Endothelial cell of umbilical vein (primary cell): ENCODE measurements at regions of chr14 and their contacts with region 1.

Region 1: DNA sequence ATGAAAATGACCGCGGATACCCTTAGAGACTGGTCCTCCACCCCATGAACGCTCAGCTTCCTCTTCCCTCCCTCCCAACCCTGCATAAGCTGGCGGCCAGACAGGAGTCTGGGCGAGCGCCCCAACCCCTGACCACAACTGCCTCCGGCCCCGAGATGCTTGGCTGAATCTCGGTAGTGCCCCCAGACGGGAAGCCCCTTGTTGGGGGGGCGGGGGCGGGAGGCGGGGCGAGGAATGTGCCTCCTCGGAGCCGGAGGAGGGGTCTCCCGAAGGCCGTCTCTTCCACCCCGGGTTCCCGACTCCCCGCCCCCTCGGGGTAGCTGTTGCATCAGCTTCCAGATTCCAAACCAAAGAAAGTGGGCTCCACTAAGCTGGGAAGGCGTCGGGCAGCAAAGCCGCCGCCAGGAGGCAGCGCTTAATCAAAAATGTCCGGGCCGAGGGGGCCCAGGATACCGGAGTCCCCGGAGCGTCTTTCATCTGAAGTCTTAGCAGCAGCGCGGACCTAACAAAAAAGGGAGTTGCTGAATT is 7.1 kb upstream of the MRPL52 start:
- DNase-seq: peak; percentile 91
- H3K4me3 ChIP-seq: peak overlapping the region; percentile 14 to 57 (median 32)
- H3K27ac ChIP-seq: peak overlapping the region; percentile 68
- H3K4me1 ChIP-seq: peaks cover 47% of the 10 kb centered on the region
- H3K27me3 ChIP-seq: no peaks in the 10 kb centered on the region
- CTCF ChIP-seq: peak; percentile 86 to 88
- POLR2A ChIP-seq: no peak

Region 2: GRCh38 chr14:21924479-21924878 is 898.2 kb before region 1 on chr14:
- CTCF ChIA-PET with region 1: no interaction called
- POLR2A ChIA-PET with region 1: no interaction called
- dilution Hi-C with region 1: no loop called
- intact Hi-C with region 1: no loop called
- DNase-seq: peak; percentile 43
- H3K4me3 ChIP-seq: no peak overlapping the region
- H3K27ac ChIP-seq: peak overlapping the region; percentile 84
- H3K4me1 ChIP-seq: peaks cover 18% of the 10 kb centered on the region
- H3K27me3 ChIP-seq: no peaks in the 10 kb centered on the region
- CTCF ChIP-seq: no peak
- POLR2A ChIP-seq: no peak

Region 3: GRCh38 chr14:22531451-22532344 is 290.9 kb before region 1 on chr14:
- CTCF ChIA-PET with region 1: no interaction called
- POLR2A ChIA-PET with region 1: no interaction called
- dilution Hi-C with region 1: no loop called
- intact Hi-C with region 1: no loop called
- DNase-seq: no peak
- H3K4me3 ChIP-seq: no peak overlapping the region
- H3K27ac ChIP-seq: no peak overlapping the region
- H3K4me1 ChIP-seq: peaks cover 19% of the 10 kb centered on the region
- H3K27me3 ChIP-seq: no peaks in the 10 kb centered on the region
- CTCF ChIP-seq: no peak
- POLR2A ChIP-seq: no peak

Region 4: GRCh38 chr14:22658946-22659345 is 163.7 kb before region 1 on chr14:
- CTCF ChIA-PET with region 1: interaction called, 85 read pairs
- POLR2A ChIA-PET with region 1: interaction called, 3 read pairs
- dilution Hi-C with region 1: no loop called
- intact Hi-C with region 1: loop called (anchors 1 kb)
- DNase-seq: peak; percentile 42
- H3K4me3 ChIP-seq: peak overlapping the region in 1 of 3 experiments; percentile 28
- H3K27ac ChIP-seq: peak overlapping the region; percentile 72
- H3K4me1 ChIP-seq: peaks cover 32% of the 10 kb centered on the region
- H3K27me3 ChIP-seq: no peaks in the 10 kb centered on the region
- CTCF ChIP-seq: no peak
- POLR2A ChIP-seq: no peak

Region 5: DNA sequence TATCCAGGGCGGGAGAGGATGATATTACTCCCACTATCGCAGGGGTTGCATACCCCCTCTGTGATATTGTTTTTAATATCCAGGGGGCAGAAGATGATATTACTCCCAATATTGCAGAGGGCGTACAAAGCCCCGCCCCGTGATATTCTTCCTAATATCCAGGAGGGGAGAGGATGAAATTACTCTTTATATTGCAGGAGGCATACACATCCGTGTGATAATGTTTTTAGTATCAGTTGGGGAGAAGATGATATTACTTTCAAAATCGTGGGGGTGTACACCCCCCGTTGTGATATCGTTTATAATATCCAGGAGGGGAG is 109.0 kb before region 1 on chr14:
- CTCF ChIA-PET with region 1: interaction called, 3 read pairs
- POLR2A ChIA-PET with region 1: interaction called, 7 read pairs
- dilution Hi-C with region 1: no loop called
- intact Hi-C with region 1: loop called (anchors 1 kb)
- DNase-seq: no peak
- H3K4me3 ChIP-seq: peak overlapping the region in 1 of 3 experiments; percentile 13
- H3K27ac ChIP-seq: peak overlapping the region; percentile 28
- H3K4me1 ChIP-seq: peaks cover 23% of the 10 kb centered on the region
- H3K27me3 ChIP-seq: no peaks in the 10 kb centered on the region
- CTCF ChIP-seq: no peak
- POLR2A ChIP-seq: no peak

Region 6: GRCh38 chr14:22726012-22726411 is 96.6 kb before region 1 on chr14:
- CTCF ChIA-PET with region 1: no interaction called
- POLR2A ChIA-PET with region 1: no interaction called
- dilution Hi-C with region 1: no loop called
- intact Hi-C with region 1: no loop called
- DNase-seq: no peak
- H3K4me3 ChIP-seq: no peak overlapping the region
- H3K27ac ChIP-seq: no peak overlapping the region
- H3K4me1 ChIP-seq: no peaks in the 10 kb centered on the region
- H3K27me3 ChIP-seq: no peaks in the 10 kb centered on the region
- CTCF ChIP-seq: no peak
- POLR2A ChIP-seq: no peak

Region 7: GRCh38 chr14:22836301-22837113 is 13.9 kb after region 1 on chr14 and contains the start of gene MMP14:
- CTCF ChIA-PET with region 1: interaction called, 63 read pairs
- POLR2A ChIA-PET with region 1: interaction called, 7 read pairs
- dilution Hi-C with region 1: no loop called
- intact Hi-C with region 1: loop called (anchors 1 kb)
- DNase-seq: peak; percentile 92
- H3K4me3 ChIP-seq: peak within 1 kb of the TSS; percentile 75 to 94 (median 86)
- H3K27ac ChIP-seq: peak within 1 kb of the TSS; percentile 84
- H3K4me1 ChIP-seq: peaks cover 32% of the 10 kb centered on the region
- H3K27me3 ChIP-seq: no peaks in the 10 kb centered on the region
- CTCF ChIP-seq: peak; percentile 26 to 54
- POLR2A ChIP-seq: peak; percentile 95
- total RNA-seq, gene MMP14: 603 and 615 TPM in 2 replicates

Region 8: GRCh38 chr14:22900081-22900799 is 77.6 kb after region 1 on chr14:
- CTCF ChIA-PET with region 1: interaction called, 36 read pairs
- POLR2A ChIA-PET with region 1: no interaction called
- dilution Hi-C with region 1: no loop called
- intact Hi-C with region 1: loop called (anchors 1 kb)
- DNase-seq: peak; percentile 70
- H3K4me3 ChIP-seq: no peak overlapping the region
- H3K27ac ChIP-seq: no peak overlapping the region
- H3K4me1 ChIP-seq: no peaks in the 10 kb centered on the region
- H3K27me3 ChIP-seq: no peaks in the 10 kb centered on the region
- CTCF ChIP-seq: peak; percentile 38 to 65
- POLR2A ChIP-seq: no peak

Region 9: GRCh38 chr14:22929104-22929847 is 106.6 kb after region 1 on chr14 and contains the start of gene PRMT5:
- CTCF ChIA-PET with region 1: interaction called, 10 read pairs
- POLR2A ChIA-PET with region 1: no interaction called
- dilution Hi-C with region 1: no loop called
- intact Hi-C with region 1: no loop called
- DNase-seq: peak; percentile 100
- H3K4me3 ChIP-seq: peak within 1 kb of the TSS; percentile 66 to 95 (median 81)
- H3K27ac ChIP-seq: peak within 1 kb of the TSS; percentile 68
- H3K4me1 ChIP-seq: peaks cover 16% of the 10 kb centered on the region
- H3K27me3 ChIP-seq: no peaks in the 10 kb centered on the region
- CTCF ChIP-seq: no peak
- POLR2A ChIP-seq: peak; percentile 64
- total RNA-seq, gene PRMT5: 67.2 and 73.1 TPM in 2 replicates